Heart left ventricle (tissue), 16 donors: ENCODE measurements at regions of chr1 and their contacts with region 1.

Region 1: DNA sequence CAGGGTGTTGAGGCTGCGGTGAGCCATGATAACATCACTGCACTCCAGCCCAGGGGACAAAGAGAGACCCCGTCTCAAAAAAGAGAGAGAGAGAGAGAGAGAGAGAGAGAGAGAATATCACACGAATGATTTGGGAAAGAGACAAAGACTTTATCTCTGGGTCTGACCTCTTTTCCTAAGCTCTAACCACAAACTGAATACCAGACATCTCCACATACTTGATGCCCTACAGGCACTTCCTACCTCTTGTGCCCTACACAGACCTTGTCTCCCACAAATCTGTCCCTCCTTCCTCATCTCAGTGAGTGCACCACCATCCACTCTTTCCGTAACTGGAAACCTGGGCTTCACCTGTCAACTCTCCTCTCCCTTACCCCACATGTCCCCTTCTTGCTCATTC is 27.0 kb upstream of the PTCH2 start:
- DNase-seq: no peak
- ATAC-seq: no peak
- H3K4me3 ChIP-seq: no peak overlapping the region
- H3K27ac ChIP-seq: no peak overlapping the region
- H3K4me1 ChIP-seq: no peaks in the 10 kb centered on the region
- H3K27me3 ChIP-seq: no peaks in the 10 kb centered on the region
- CTCF ChIP-seq: no peak
- POLR2A ChIP-seq: no peak

Region 2: GRCh38 chr1:44609412-44609767 is 260.7 kb before region 1 on chr1:
- intact Hi-C with region 1: loop called in 1 of 10 experiments (anchors 10 kb)
- DNase-seq: peak in 4 of 5 donors; percentile 37 to 68 (median 51)
- ATAC-seq: peak; percentile 31 to 78 (median 76)
- H3K4me3 ChIP-seq: no peak overlapping the region
- H3K27ac ChIP-seq: no peak overlapping the region
- H3K4me1 ChIP-seq: no peaks in the 10 kb centered on the region
- H3K27me3 ChIP-seq: peaks cover 0 to 21% (median 0%) of the 10 kb centered on the region in 9 donors
- CTCF ChIP-seq: peak in 11 of 12 donors; percentile 29 to 60 (median 51)
- POLR2A ChIP-seq: no peak